ENCODE measurements at regions of chr17 and their contacts with region 1.

Region 1: GRCh38 chr17:48335858-48336500 is 94.0 kb downstream of the SKAP1 start:
- DNase-seq: no peak
- H3K4me3 ChIP-seq: no peak overlapping the region
- H3K27ac ChIP-seq: no peak overlapping the region
- H3K4me1 ChIP-seq: no peaks in the 10 kb centered on the region
- H3K27me3 ChIP-seq: peaks cover 98% of the 10 kb centered on the region
- CTCF ChIP-seq: peak; percentile 78

Region 2: GRCh38 chr17:48618256-48618897 is 282.4 kb after region 1 on chr17:
- intact Hi-C with region 1: loop called (anchors 10 kb)
- DNase-seq: peak; percentile 84
- H3K4me3 ChIP-seq: no peak overlapping the region
- H3K27ac ChIP-seq: no peak overlapping the region
- H3K4me1 ChIP-seq: peaks cover 25% of the 10 kb centered on the region
- H3K27me3 ChIP-seq: peaks cover 100% of the 10 kb centered on the region
- CTCF ChIP-seq: peak; percentile 98